Activated T-helper 1 cell treated with anti-CD3 and anti-CD28 coated beads, Interleukin-12 subunit alpha, Interleukin-12 subunit beta, Interleukin-2, Interleukin-4 antibody, amounts not matched to agents 30 ng/mL and 10 ng/mL and 1 ng/mL, durations not matched to agents 14 hours and 24 hours and 36 hours (primary cell): ENCODE measurements at regions of chr18 and their contacts with region 1.

Region 1: GRCh38 chr18:74652392-74652988 is 54.8 kb downstream of the ZNF407 start:
- DNase-seq: no peak
- H3K4me3 Mint-ChIP-seq: no peak overlapping the region
- H3K27ac Mint-ChIP-seq: no peak overlapping the region
- H3K4me1 Mint-ChIP-seq: no peaks in the 10 kb centered on the region
- H3K27me3 Mint-ChIP-seq: no peaks in the 10 kb centered on the region

Region 2: GRCh38 chr18:74665905-74666304 is 13.4 kb after region 1 on chr18:
- intact Hi-C with region 1: no loop called
- DNase-seq: no peak
- H3K4me3 Mint-ChIP-seq: no peak overlapping the region
- H3K27ac Mint-ChIP-seq: no peak overlapping the region
- H3K4me1 Mint-ChIP-seq: no peaks in the 10 kb centered on the region
- H3K27me3 Mint-ChIP-seq: no peaks in the 10 kb centered on the region

Region 3: DNA sequence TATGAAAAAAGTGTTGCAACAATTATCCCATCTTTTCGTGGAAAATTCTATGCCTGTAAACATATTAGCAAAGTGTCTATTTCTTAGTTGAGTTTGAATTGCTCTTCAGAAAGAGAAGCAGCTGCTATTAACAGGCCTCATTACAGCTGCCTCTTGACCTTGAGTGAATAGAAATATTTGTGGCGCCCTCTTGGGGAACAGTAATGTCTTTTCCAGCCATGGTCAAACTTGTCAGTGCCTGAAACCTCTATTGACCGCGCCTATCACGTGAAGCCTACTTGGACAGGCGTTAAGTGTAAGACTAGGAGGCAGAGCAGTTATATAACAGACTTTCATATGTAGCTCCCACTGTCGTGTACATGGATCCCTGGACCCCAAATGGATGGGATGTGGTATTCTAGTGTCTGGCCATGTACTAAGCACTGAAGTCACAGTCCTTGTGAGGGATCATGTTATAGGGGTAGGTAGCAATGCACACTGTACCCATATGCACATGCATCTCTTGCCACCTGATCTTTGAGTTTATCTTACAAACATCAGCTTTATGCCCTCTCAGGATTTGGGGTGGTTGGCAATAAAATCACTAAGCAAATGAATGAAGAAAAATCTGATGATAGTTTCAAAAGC is 311.4 kb after region 1 on chr18:
- intact Hi-C with region 1: loop called (anchors 2 kb)
- DNase-seq: no peak
- H3K4me3 Mint-ChIP-seq: no peak overlapping the region
- H3K27ac Mint-ChIP-seq: no peak overlapping the region
- H3K4me1 Mint-ChIP-seq: no peaks in the 10 kb centered on the region
- H3K27me3 Mint-ChIP-seq: peaks cover 4% of the 10 kb centered on the region

Region 4: GRCh38 chr18:75478996-75479880 is 826.7 kb after region 1 on chr18:
- intact Hi-C with region 1: loop called (anchors 1 kb)
- DNase-seq: no peak
- H3K4me3 Mint-ChIP-seq: no peak overlapping the region
- H3K27ac Mint-ChIP-seq: no peak overlapping the region
- H3K4me1 Mint-ChIP-seq: no peaks in the 10 kb centered on the region
- H3K27me3 Mint-ChIP-seq: peaks cover 9% of the 10 kb centered on the region

Region 5: GRCh38 chr18:76349067-76349715 is 1696.7 kb after region 1 on chr18:
- intact Hi-C with region 1: loop called (anchors 1 kb)
- DNase-seq: peak; percentile 41
- H3K4me3 Mint-ChIP-seq: peak overlapping the region; percentile 27
- H3K27ac Mint-ChIP-seq: no peak overlapping the region
- H3K4me1 Mint-ChIP-seq: peaks cover 7% of the 10 kb centered on the region
- H3K27me3 Mint-ChIP-seq: peaks cover 2% of the 10 kb centered on the region